ENCODE measurements at regions of chr2 and their contacts with region 1.

Region 1: GRCh38 chr2:97697252-97698235 is 15.8 kb upstream of the ZAP70 start:
- DNase-seq: peak; percentile 32
- H3K4me3 ChIP-seq: peak overlapping the region in 1 of 4 donors; percentile 27
- H3K27ac ChIP-seq: no peak overlapping the region
- H3K4me1 ChIP-seq: peaks cover 0 to 5% (median 0%) of the 10 kb centered on the region in 3 donors
- H3K27me3 ChIP-seq: no peaks in the 10 kb centered on the region
- CTCF ChIP-seq: peak; percentile 94 to 99 (median 98)
- POLR2A ChIP-seq: no peak

Region 2: DNA sequence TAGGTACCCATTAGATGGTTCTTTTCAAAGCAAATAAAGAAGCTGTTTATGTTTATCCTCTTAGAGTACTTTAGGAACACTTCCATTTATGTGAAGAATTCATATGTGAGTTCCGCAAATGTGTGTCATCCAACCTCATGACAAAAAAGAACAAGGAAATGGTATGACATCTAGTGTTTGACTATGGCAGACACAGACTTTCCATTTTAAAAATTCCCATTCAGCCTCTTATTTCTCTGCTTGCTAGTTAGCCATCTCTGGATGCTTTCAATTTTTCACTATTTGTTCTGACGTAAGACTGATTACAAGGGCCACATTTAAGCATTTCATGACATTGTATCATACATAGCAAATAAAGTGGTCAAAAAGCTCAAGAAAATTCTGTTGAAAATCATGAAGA is 118.9 kb after region 1 on chr2:
- intact Hi-C with region 1: no loop called
- DNase-seq: no peak
- H3K4me3 ChIP-seq: no peak overlapping the region
- H3K27ac ChIP-seq: no peak overlapping the region
- H3K4me1 ChIP-seq: no peaks in the 10 kb centered on the region
- H3K27me3 ChIP-seq: no peaks in the 10 kb centered on the region
- CTCF ChIP-seq: no peak
- POLR2A ChIP-seq: no peak

Region 3: GRCh38 chr2:97914691-97915213 is 217.2 kb after region 1 on chr2:
- intact Hi-C with region 1: no loop called
- DNase-seq: no peak
- H3K4me3 ChIP-seq: no peak overlapping the region
- H3K27ac ChIP-seq: no peak overlapping the region
- H3K4me1 ChIP-seq: peaks cover 0 to 23% (median 0%) of the 10 kb centered on the region in 3 donors
- H3K27me3 ChIP-seq: no peaks in the 10 kb centered on the region
- CTCF ChIP-seq: no peak
- POLR2A ChIP-seq: no peak

Region 4: DNA sequence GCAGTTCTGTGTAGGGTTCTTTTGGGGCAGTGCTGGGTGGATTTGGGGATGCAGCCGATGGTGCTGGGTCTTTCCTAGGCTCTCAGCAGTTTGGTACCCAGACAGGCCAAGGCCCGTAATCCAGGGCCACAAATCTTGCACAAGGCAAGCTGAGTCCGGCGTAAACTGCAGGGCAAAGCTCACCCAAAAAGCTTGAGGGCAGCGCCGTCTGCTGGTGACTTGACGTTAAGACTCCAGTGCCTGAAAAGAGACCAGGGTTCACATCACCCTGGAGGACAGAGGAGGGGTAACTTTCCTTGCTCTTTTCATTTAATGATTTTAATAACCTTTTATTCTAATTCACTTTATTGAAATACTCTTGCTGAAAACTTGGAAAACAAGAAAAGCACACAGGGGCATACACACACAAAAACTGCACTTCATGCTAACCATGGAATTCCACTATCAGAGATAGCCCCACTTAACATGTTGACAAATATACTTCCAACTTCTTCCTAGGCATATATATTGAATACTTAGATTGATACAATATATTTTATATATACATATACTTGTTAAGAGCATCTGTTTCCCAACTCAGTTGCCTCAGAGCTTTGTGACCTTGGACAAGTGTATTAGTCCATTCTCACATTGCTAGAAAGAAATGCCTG is 687.6 kb after region 1 on chr2:
- intact Hi-C with region 1: loop called (anchors 10 kb)
- DNase-seq: no peak
- H3K4me3 ChIP-seq: no peak overlapping the region
- H3K27ac ChIP-seq: no peak overlapping the region
- H3K4me1 ChIP-seq: peaks cover 0 to 3% (median 0%) of the 10 kb centered on the region in 3 donors
- H3K27me3 ChIP-seq: peaks cover 0 to 14% (median 0%) of the 10 kb centered on the region in 4 donors
- CTCF ChIP-seq: peak; percentile 79 to 97 (median 93)
- POLR2A ChIP-seq: no peak

Measured in esophagus squamous epithelium (tissue), 5 donors.